ENCODE measurements at regions of chr14 and their contacts with region 1.

Region 1: GRCh38 chr14:103121846-103122584 is 1.2 kb upstream of the TNFAIP2 start:
- DNase-seq: peak; percentile 86
- H3K4me3 ChIP-seq: 0 out of 4 replicates have a peak overlapping the region, but pooled peaks of 1 of the 2 experiments have one; percentile 9
- H3K27ac ChIP-seq: peak overlapping the region; percentile 27 to 69; a peak in 3 of 4 replicates
- H3K4me1 ChIP-seq: peaks cover 11 to 24% of the 10 kb centered on the region in 2 experiments
- H3K27me3 ChIP-seq: no peaks in the 10 kb centered on the region
- CTCF ChIP-seq: no peak
- EP300 ChIP-seq: peak in 1 of 2 experiments; percentile 75; a peak in 1 of 4 replicates
- RAD21 ChIP-seq: 0 out of 2 replicates have a peak, but pooled peaks have one; percentile 11

Region 2: GRCh38 chr14:102878174-102878969 is 243.6 kb before region 1 on chr14:
- CTCF ChIA-PET with region 1: no interaction called
- POLR2A ChIA-PET with region 1: no interaction called
- DNase-seq: no peak
- H3K4me3 ChIP-seq: no peak overlapping the region
- H3K27ac ChIP-seq: no peak overlapping the region
- H3K4me1 ChIP-seq: peaks cover 0 to 11% of the 10 kb centered on the region in 2 experiments; a peak in 2 of 4 replicates
- H3K27me3 ChIP-seq: no peaks in the 10 kb centered on the region
- CTCF ChIP-seq: no peak
- EP300 ChIP-seq: no peak
- RAD21 ChIP-seq: no peak

Region 3: GRCh38 chr14:103185051-103185992 is 63.3 kb after region 1 on chr14:
- CTCF ChIA-PET with region 1: interaction called, 11 read pairs
- POLR2A ChIA-PET with region 1: no interaction called
- DNase-seq: peak; percentile 65
- H3K4me3 ChIP-seq: no peak overlapping the region
- H3K27ac ChIP-seq: no peak overlapping the region
- H3K4me1 ChIP-seq: peaks cover 0 to 6% of the 10 kb centered on the region in 2 experiments; a peak in 1 of 4 replicates
- H3K27me3 ChIP-seq: no peaks in the 10 kb centered on the region
- CTCF ChIP-seq: peak; percentile 81
- EP300 ChIP-seq: no peak
- RAD21 ChIP-seq: peak; percentile 66

Measured in SK-N-SH (cell line).